T-cell (primary cell): ENCODE measurements at regions of chr4 and their contacts with region 1.

Region 1: DNA sequence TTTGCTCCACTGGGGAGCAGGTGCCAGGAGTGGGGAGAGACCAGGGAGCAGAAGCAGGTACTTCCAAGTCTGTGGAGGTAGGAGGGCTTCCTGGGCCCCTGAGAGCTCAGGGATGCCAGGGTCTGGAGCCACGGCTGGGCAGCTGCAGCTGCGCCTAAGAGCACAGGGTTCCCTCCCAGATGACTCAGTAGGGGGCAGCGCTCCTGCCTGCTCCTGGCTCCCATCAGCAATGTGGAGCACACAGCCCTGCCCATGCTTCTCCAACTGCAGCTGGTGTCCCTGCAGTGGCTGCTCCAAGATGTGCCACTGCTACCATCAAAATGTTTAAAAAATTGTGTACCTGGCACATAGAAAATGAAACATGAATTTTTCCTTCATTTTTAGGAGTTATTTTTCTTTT is 1028.2 kb downstream of the PCDH7 start:
- DNase-seq: no peak
- ATAC-seq: no peak
- H3K4me3 ChIP-seq: no peak overlapping the region
- H3K4me3 Mint-ChIP-seq: no peak overlapping the region
- H3K27ac ChIP-seq: no peak overlapping the region
- H3K27ac Mint-ChIP-seq: no peak overlapping the region
- H3K4me1 ChIP-seq: no peaks in the 10 kb centered on the region
- H3K4me1 Mint-ChIP-seq: no peaks in the 10 kb centered on the region
- H3K27me3 ChIP-seq: no peaks in the 10 kb centered on the region
- H3K27me3 Mint-ChIP-seq: no peaks in the 10 kb centered on the region

Region 2: GRCh38 chr4:31645236-31645635 is 103.1 kb before region 1 on chr4:
- CTCF ChIA-PET with region 1: no interaction called
- POLR2A ChIA-PET with region 1: interaction called in 1 of 2 experiments, 10 read pairs
- DNase-seq: no peak
- ATAC-seq: no peak
- H3K4me3 ChIP-seq: no peak overlapping the region
- H3K4me3 Mint-ChIP-seq: no peak overlapping the region
- H3K27ac ChIP-seq: no peak overlapping the region
- H3K27ac Mint-ChIP-seq: no peak overlapping the region
- H3K4me1 ChIP-seq: no peaks in the 10 kb centered on the region
- H3K4me1 Mint-ChIP-seq: no peaks in the 10 kb centered on the region
- H3K27me3 ChIP-seq: no peaks in the 10 kb centered on the region
- H3K27me3 Mint-ChIP-seq: no peaks in the 10 kb centered on the region

Region 3: DNA sequence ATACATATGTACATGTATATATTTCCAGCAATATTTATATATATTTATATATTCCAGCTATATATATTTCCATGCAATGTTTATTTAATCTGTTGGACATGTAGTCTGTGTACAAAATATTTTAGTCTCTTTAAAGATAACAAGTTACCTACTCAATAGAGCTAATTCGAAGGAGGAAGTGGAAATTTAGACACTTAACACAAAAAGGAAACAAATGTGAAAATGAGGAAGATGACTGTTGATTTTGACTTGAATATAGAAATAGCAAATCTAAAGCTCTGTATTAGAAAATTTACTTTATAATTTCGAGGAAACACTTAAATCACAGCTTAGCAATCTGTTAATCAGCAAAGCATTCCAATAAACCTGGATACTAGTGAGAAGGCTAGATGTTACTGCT is 36.2 kb after region 1 on chr4:
- CTCF ChIA-PET with region 1: no interaction called
- POLR2A ChIA-PET with region 1: no interaction called
- DNase-seq: no peak
- ATAC-seq: no peak
- H3K4me3 ChIP-seq: no peak overlapping the region
- H3K4me3 Mint-ChIP-seq: no peak overlapping the region
- H3K27ac ChIP-seq: no peak overlapping the region
- H3K27ac Mint-ChIP-seq: no peak overlapping the region
- H3K4me1 ChIP-seq: no peaks in the 10 kb centered on the region
- H3K4me1 Mint-ChIP-seq: no peaks in the 10 kb centered on the region
- H3K27me3 ChIP-seq: no peaks in the 10 kb centered on the region
- H3K27me3 Mint-ChIP-seq: no peaks in the 10 kb centered on the region

Region 4: DNA sequence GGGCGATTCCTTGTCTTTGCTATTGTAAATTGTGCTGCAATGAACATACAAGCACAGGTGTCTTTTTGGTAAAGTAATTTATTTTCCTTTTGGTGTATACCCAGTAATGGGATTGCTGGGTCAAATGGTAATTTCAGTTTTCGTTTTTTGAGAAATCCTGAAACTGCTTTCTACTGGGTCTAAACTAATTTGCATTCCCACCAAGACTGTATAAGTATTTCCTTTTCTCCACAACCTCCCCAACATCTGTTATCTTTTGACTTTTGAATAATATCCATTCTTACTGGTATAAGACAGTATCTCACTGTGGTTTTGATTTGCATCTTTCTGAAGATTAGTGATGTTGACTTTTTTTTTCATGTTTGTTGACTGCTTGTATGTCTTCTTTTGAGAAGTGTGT is 1477.8 kb after region 1 on chr4:
- CTCF ChIA-PET with region 1: no interaction called
- POLR2A ChIA-PET with region 1: no interaction called
- DNase-seq: no peak
- ATAC-seq: no peak
- H3K4me3 ChIP-seq: no peak overlapping the region
- H3K4me3 Mint-ChIP-seq: no peak overlapping the region
- H3K27ac ChIP-seq: no peak overlapping the region
- H3K27ac Mint-ChIP-seq: no peak overlapping the region
- H3K4me1 ChIP-seq: no peaks in the 10 kb centered on the region
- H3K4me1 Mint-ChIP-seq: no peaks in the 10 kb centered on the region
- H3K27me3 ChIP-seq: no peaks in the 10 kb centered on the region
- H3K27me3 Mint-ChIP-seq: no peaks in the 10 kb centered on the region